ENCODE measurements at regions of chr22 and their contacts with region 1.

Region 1: GRCh38 chr22:26447584-26448329 is 18.7 kb downstream of the ASPHD2 start:
- DNase-seq: no peak
- H3K4me3 ChIP-seq: no peak overlapping the region
- H3K27ac ChIP-seq: no peak overlapping the region
- H3K4me1 ChIP-seq: no peaks in the 10 kb centered on the region
- H3K27me3 ChIP-seq: no peaks in the 10 kb centered on the region
- CTCF ChIP-seq: no peak
- POLR2A ChIP-seq: no peak

Region 2: DNA sequence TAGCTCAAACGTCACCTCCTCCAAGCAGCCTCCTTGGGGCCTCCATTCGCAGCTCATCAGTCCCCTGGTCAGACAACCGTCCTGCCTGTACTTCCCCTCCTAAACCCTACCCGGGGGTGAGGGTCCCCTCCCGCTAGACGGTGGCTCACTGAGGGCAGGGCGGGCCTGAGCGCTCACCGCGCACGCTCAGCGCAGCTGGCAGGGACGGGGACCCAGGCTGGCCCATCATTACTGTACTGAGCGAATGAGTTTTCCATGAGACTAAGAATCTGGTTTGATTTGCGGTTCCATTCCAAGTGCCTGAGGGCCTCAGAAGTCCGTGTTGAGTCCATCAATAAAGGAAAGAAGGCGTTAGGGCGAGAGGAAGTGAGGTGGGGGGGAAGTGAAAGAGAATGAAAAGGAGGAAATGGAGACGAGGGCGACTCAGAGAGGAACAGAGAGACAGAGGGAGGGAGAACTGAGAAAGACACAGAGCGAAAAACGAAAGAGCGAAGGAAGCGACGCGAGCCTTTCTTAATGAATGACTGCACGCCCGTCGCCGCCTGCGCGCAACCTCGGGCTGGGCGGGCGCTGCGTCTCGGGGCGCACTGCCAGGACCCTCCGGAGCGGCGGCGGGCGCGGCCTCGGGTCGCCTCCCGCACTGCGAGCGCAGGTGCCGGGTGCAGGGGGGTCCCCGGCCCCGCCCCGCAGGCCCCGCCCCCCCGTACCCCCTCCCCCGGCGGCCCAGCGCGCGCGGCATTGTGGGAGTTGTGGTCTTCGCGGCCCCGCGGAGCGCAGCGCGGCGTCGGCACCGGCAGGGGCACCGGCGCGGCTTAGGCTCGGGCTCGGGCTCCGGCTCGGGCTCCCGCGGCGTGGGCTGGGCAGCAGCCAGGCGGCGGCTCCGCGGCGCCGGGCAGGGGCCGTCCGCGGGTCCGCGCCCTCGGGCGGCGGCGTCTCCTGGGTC is 19.0 kb before region 1 on chr22 and contains the start of gene ASPHD2:
- intact Hi-C with region 1: no loop called
- DNase-seq: peak in 1 of 2 donors; percentile 26
- H3K4me3 ChIP-seq: peak within 1 kb of the TSS; percentile 48 to 84 (median 58)
- H3K27ac ChIP-seq: peak within 1 kb of the TSS; percentile 40 to 57
- H3K4me1 ChIP-seq: no peaks in the 10 kb centered on the region
- H3K27me3 ChIP-seq: no peaks in the 10 kb centered on the region
- CTCF ChIP-seq: no peak
- POLR2A ChIP-seq: no peak
- total RNA-seq, gene ASPHD2: 0.59 to 1.3 (median 0.64) TPM

Region 3: GRCh38 chr22:26617271-26618199 is 169.8 kb after region 1 on chr22 and contains the start of gene CRYBB1:
- intact Hi-C with region 1: loop called (anchors 2 kb)
- DNase-seq: no peak
- H3K4me3 ChIP-seq: no peak within 1 kb of the TSS
- H3K27ac ChIP-seq: no peak within 1 kb of the TSS
- H3K4me1 ChIP-seq: no peaks in the 10 kb centered on the region
- H3K27me3 ChIP-seq: peaks cover 0 to 10% of the 10 kb centered on the region in 2 donors
- CTCF ChIP-seq: no peak
- POLR2A ChIP-seq: no peak
- total RNA-seq, gene CRYBB1: 2.6 TPM in 1 of 3 donors, not detected in the others

Measured in breast epithelium (tissue), 4 donors.